Activated B cell treated with CpG ODN at 0.5 μM for 24 hours (primary cell): ENCODE measurements at regions of chr6 and their contacts with region 1.

Region 1: DNA sequence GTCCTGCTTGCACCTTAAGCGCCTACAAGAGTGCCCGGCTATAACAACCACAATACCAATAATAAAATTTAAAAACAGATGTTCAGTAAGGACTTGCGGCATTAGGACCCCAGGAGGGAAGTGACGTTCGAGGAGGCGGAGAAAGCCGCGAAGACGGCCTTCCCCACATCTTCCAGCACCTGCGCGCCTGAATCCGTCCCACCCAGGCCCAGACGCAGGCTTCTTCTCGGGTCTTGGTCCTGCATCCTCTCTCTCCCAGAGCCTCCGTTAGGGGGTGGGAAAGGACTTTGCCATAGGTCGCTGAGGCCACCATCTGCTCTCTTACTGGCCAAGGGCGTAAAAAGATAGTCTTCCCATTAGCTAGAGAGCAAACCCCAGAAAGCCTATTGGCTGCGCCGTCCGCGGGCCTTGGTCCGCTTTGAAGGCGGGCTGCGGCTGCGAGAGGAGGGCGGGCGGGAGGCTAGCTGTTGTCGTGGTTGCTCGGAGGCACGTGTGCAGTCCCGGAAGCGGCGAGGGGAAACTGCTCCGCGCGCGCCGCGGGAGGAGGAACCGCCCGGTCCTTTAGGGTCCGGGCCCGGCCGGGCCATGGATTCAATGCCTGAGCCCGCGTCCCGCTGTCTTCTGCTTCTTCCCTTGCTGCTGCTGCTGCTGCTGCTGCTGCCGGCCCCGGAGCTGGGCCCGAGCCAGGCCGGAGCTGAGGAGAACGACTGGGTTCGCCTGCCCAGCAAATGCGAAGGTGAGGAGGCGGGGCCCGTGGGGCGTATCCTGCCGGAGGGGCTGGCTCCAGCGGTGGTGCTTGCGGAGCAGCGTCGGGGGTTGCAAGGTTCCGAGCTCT is at the start of gene CNPY3:
- DNase-seq: peak; percentile 84
- ATAC-seq: peak; percentile 74
- H3K4me3 Mint-ChIP-seq: peak within 1 kb of the TSS; percentile 97
- H3K27ac Mint-ChIP-seq: peak within 1 kb of the TSS; percentile 97
- H3K4me1 Mint-ChIP-seq: peaks cover 58% of the 10 kb centered on the region
- H3K27me3 Mint-ChIP-seq: no peaks in the 10 kb centered on the region
- CTCF ChIP-seq: no peak
- total RNA-seq, gene CNPY3: 120 and 121 TPM in 2 replicates

Region 2: GRCh38 chr6:42610416-42610815 is 318.8 kb before region 1 on chr6:
- CTCF ChIA-PET with region 1: no interaction called
- POLR2A ChIA-PET with region 1: no interaction called
- intact Hi-C with region 1: no loop called
- DNase-seq: no peak
- ATAC-seq: no peak
- H3K4me3 Mint-ChIP-seq: no peak overlapping the region
- H3K27ac Mint-ChIP-seq: no peak overlapping the region
- H3K4me1 Mint-ChIP-seq: no peaks in the 10 kb centered on the region
- H3K27me3 Mint-ChIP-seq: no peaks in the 10 kb centered on the region
- CTCF ChIP-seq: no peak

Region 3: DNA sequence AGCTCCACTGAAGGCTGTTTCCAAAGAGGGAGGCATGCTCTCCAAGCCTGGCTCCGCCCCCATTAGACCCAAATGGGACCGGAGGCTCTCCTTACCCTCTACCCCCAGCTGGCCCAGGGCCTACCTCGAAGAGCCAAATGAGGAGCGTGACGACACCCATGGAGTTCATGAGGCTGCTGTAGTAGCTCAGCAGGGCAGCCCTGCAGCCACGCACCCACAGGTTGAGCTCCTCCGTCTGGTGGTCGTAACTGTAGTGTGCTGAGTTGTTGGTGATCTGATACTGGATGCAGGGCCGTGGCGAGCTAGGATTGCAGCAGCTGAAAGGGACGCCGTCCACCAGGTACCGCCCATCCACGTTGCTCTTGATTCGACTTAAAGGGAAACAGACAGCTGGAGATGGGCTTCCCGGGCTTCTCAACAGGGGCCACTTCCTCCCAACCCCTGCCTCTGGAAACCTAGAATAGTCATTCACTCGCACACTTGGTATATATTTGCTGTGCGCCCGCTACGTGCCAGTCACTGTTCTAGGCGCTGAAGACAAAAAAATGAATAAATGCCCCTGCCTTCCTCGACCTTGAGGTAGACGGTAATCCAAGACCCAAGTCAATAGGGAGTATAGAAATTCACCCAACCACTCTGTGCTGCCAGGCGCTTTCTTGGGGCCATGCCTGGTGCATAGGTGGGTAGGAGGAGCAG is 224.8 kb before region 1 on chr6:
- CTCF ChIA-PET with region 1: no interaction called
- POLR2A ChIA-PET with region 1: no interaction called
- intact Hi-C with region 1: no loop called
- DNase-seq: no peak
- ATAC-seq: no peak
- H3K4me3 Mint-ChIP-seq: no peak overlapping the region
- H3K27ac Mint-ChIP-seq: no peak overlapping the region
- H3K4me1 Mint-ChIP-seq: no peaks in the 10 kb centered on the region
- H3K27me3 Mint-ChIP-seq: no peaks in the 10 kb centered on the region
- CTCF ChIP-seq: no peak

Region 4: DNA sequence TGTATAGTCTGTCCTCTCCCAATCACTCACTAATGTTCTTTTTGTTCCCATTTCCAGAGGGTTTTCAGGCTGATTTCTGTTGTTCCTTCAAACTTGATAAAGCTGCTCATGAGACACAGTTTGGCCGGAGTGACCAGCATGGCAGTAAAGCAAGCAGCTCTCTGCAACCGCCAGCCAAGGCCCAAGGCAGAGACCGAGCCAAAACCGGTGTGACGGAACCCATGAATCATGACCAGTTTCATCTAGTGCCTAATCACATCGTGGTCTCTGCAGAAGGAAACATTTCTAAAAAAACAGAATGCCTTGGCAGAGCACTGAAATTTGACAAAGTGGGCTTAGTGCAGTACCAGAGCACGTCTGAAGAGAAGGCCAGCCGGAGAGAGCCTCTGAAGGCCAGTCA is 64.6 kb before region 1 on chr6:
- CTCF ChIA-PET with region 1: no interaction called
- POLR2A ChIA-PET with region 1: no interaction called
- intact Hi-C with region 1: no loop called
- DNase-seq: no peak
- ATAC-seq: no peak
- H3K4me3 Mint-ChIP-seq: no peak overlapping the region
- H3K27ac Mint-ChIP-seq: no peak overlapping the region
- H3K4me1 Mint-ChIP-seq: no peaks in the 10 kb centered on the region
- H3K27me3 Mint-ChIP-seq: no peaks in the 10 kb centered on the region
- CTCF ChIP-seq: no peak

Region 5: GRCh38 chr6:42879372-42880239 is 49.6 kb before region 1 on chr6 and contains the start of gene RPL7L1:
- CTCF ChIA-PET with region 1: no interaction called
- POLR2A ChIA-PET with region 1: interaction called, 22 read pairs
- intact Hi-C with region 1: loop called (anchors 1 kb)
- DNase-seq: peak; percentile 76
- ATAC-seq: peak; percentile 92
- H3K4me3 Mint-ChIP-seq: peak within 1 kb of the TSS; percentile 100
- H3K27ac Mint-ChIP-seq: peak within 1 kb of the TSS; percentile 99
- H3K4me1 Mint-ChIP-seq: peaks cover 28% of the 10 kb centered on the region
- H3K27me3 Mint-ChIP-seq: no peaks in the 10 kb centered on the region
- CTCF ChIP-seq: no peak
- total RNA-seq, gene RPL7L1: 94.5 and 110 TPM in 2 replicates

Region 6: DNA sequence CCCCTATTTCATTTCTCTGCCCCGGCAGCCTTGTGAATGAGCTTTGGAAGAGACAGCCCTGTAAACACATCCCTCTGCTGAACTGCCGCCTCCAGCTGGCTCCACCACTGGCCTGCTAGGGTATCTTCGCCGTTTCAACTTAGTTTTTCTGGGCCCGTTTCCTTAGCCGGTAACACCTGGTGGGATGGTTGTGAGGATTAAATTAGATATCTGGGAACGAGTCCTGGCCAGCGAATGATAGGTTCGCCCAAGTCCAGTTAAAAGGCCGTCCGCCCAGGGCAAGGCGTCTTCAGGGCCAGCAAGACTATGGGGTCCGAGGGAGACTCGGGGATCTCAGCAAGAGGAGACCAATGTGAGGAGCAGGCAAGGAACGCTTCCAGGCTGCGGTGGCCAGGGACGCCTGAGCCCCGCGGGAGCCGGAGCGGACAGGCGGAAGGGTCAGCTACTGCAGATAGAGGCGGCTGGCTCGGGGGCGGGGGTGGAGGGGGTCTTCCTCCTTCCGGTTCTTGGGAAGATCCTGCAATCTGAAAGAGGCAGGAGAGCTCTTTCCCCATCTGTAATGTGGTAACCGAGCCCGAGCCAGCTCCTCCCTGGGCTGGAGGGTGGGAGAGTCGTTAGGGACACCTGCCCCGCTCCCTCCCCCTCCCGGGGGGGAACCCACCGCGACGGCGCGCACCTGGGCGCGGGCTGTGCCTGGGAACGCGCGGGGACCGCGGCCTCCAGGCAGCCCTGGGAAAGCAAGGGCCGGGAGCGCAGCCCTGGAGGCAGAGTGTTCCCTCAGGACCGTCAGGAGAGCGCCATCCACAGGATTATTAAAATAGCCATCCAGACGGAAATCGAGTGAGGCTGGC is 17.8 kb before region 1 on chr6:
- CTCF ChIA-PET with region 1: no interaction called
- POLR2A ChIA-PET with region 1: interaction called, 20 read pairs
- intact Hi-C with region 1: loop called (anchors 1 kb)
- DNase-seq: no peak
- ATAC-seq: no peak
- H3K4me3 Mint-ChIP-seq: peak overlapping the region; percentile 61
- H3K27ac Mint-ChIP-seq: no peak overlapping the region
- H3K4me1 Mint-ChIP-seq: peaks cover 8% of the 10 kb centered on the region
- H3K27me3 Mint-ChIP-seq: no peaks in the 10 kb centered on the region
- CTCF ChIP-seq: no peak

Region 7: DNA sequence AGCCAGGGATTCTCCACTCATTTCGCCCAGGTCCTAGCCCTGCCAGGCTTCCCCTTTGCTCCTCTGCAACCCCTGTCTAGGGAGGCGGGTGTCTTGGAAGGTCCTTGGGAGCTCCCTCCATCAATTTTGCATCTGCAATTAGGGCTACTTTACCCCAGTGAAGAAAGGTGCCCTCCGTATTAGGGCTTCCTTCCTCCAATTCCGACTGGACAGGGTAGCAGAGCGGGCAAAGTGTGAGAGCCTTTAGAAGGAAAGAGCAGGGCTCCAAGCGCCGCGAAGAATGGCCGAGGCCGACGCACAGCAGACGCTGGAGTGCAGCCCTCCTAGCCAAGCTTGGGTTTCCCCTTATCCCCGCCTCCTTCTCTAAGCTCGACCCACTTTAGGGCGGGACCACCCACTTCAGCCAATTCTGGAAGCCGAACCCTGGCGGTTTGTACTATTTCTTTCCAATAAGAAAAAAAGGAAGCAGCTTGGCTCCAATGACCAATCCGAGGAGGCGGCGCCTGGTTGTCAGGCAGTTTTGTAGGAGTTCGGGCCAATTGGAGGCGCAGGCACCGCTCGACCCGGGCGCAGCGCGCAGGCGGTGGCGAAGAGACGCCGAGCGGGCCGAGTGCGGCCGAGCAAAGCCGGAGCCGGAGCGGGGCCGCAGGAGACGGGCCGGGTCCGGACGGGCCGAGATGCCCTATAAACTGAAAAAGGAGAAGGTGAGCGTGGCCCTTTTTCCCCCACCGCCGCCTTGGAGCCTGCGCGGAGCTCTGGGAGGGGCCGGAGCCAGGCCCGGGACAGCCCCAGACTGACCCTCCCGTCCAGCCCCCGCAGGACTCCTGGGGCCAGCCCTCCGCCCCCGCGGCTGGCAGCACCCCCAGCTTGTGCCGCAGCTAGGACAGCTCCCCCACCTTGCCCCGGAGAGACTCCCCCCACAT is 55.1 kb after region 1 on chr6 and contains the start of gene PPP2R5D:
- CTCF ChIA-PET with region 1: interaction called, 7 read pairs
- POLR2A ChIA-PET with region 1: interaction called, 97 read pairs
- intact Hi-C with region 1: loop called (anchors 1 kb)
- DNase-seq: peak; percentile 88
- ATAC-seq: peak; percentile 95
- H3K4me3 Mint-ChIP-seq: peak within 1 kb of the TSS; percentile 85
- H3K27ac Mint-ChIP-seq: peak within 1 kb of the TSS; percentile 88
- H3K4me1 Mint-ChIP-seq: peaks cover 44% of the 10 kb centered on the region
- H3K27me3 Mint-ChIP-seq: no peaks in the 10 kb centered on the region
- CTCF ChIP-seq: no peak
- total RNA-seq, gene PPP2R5D: 26.7 and 26.8 TPM in 2 replicates

Region 8: GRCh38 chr6:43053545-43054205 is 124.5 kb after region 1 on chr6 and contains the start of gene CUL7:
- CTCF ChIA-PET with region 1: no interaction called
- POLR2A ChIA-PET with region 1: interaction called, 43 read pairs
- intact Hi-C with region 1: loop called (anchors 1 kb)
- DNase-seq: peak; percentile 81
- ATAC-seq: peak; percentile 99
- H3K4me3 Mint-ChIP-seq: peak within 1 kb of the TSS; percentile 90
- H3K27ac Mint-ChIP-seq: peak within 1 kb of the TSS; percentile 90
- H3K4me1 Mint-ChIP-seq: peaks cover 37% of the 10 kb centered on the region
- H3K27me3 Mint-ChIP-seq: no peaks in the 10 kb centered on the region
- CTCF ChIP-seq: no peak
- total RNA-seq, gene CUL7: 15.9 and 19.1 TPM in 2 replicates

Region 9: GRCh38 chr6:43369174-43370022 is 440.2 kb after region 1 on chr6 and contains the start of gene ZNF318:
- CTCF ChIA-PET with region 1: no interaction called
- POLR2A ChIA-PET with region 1: interaction called, 3 read pairs
- intact Hi-C with region 1: loop called (anchors 5 kb)
- DNase-seq: peak; percentile 92
- ATAC-seq: peak; percentile 90
- H3K4me3 Mint-ChIP-seq: peak within 1 kb of the TSS; percentile 95
- H3K27ac Mint-ChIP-seq: peak within 1 kb of the TSS; percentile 94
- H3K4me1 Mint-ChIP-seq: peaks cover 79% of the 10 kb centered on the region
- H3K27me3 Mint-ChIP-seq: no peaks in the 10 kb centered on the region
- CTCF ChIP-seq: no peak
- total RNA-seq, gene ZNF318: 135 and 159 TPM in 2 replicates

Region 10: GRCh38 chr6:43575772-43576551 is 646.8 kb after region 1 on chr6 and contains the starts of genes POLH and XPO5:
- CTCF ChIA-PET with region 1: no interaction called
- POLR2A ChIA-PET with region 1: no interaction called
- intact Hi-C with region 1: loop called (anchors 2 kb)
- DNase-seq: peak; percentile 91
- ATAC-seq: peak; percentile 94
- H3K4me3 Mint-ChIP-seq: peak within 1 kb of the TSS; percentile 97
- H3K27ac Mint-ChIP-seq: peak within 1 kb of the TSS; percentile 86
- H3K4me1 Mint-ChIP-seq: peaks cover 38% of the 10 kb centered on the region
- H3K27me3 Mint-ChIP-seq: no peaks in the 10 kb centered on the region
- CTCF ChIP-seq: no peak
- total RNA-seq, gene POLH: 23.3 and 26.5 TPM in 2 replicates
- total RNA-seq, gene XPO5: 54.4 and 59.4 TPM in 2 replicates